ENCODE measurements at regions of chr1 and their contacts with region 1.

Region 1: GRCh38 chr1:246753670-246754535 is 29.7 kb downstream of the SCCPDH start:
- H3K4me3 Mint-ChIP-seq: no peak overlapping the region
- H3K27ac Mint-ChIP-seq: no peak overlapping the region
- H3K4me1 Mint-ChIP-seq: peaks cover 7% of the 10 kb centered on the region
- H3K27me3 Mint-ChIP-seq: no peaks in the 10 kb centered on the region

Region 2: DNA sequence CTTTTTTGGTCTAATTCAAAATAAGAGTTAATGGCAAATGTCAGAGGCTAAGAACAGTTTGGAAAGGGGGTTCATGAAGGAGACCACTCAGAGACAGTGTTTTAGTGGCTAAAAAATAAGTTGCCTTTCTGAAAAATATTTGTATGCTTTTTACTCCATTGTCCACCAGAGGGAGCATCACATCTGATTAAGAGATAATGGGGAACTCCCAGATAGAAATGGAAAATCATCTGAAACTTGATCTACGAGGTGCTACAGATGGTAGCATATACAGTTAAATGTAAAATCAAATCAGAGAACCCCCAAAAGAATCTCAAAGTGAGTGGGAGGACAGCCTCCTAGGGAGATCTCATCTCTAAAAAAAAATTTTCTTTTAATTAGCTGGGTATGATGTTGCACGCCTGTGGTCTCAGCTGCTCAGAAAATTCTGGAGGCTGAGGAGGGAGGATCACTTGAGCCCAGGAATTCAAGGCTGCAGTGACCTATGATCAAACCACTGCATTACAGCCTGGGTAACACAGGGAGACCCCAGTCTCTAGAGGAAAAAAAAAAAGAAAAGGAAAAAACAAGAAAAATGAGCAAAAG is 256.5 kb before region 1 on chr1:
- intact Hi-C with region 1: loop called (anchors 1 kb)
- H3K4me3 Mint-ChIP-seq: no peak overlapping the region
- H3K27ac Mint-ChIP-seq: no peak overlapping the region
- H3K4me1 Mint-ChIP-seq: peaks cover 11% of the 10 kb centered on the region
- H3K27me3 Mint-ChIP-seq: no peaks in the 10 kb centered on the region

Region 3: GRCh38 chr1:246566128-246566812 is 187.6 kb before region 1 on chr1 and contains the starts of genes CNST and TFB2M:
- intact Hi-C with region 1: loop called (anchors 10 kb)
- H3K4me3 Mint-ChIP-seq: peak within 1 kb of the TSS; percentile 99
- H3K27ac Mint-ChIP-seq: peak within 1 kb of the TSS; percentile 99
- H3K4me1 Mint-ChIP-seq: peaks cover 40% of the 10 kb centered on the region
- H3K27me3 Mint-ChIP-seq: no peaks in the 10 kb centered on the region

Region 4: DNA sequence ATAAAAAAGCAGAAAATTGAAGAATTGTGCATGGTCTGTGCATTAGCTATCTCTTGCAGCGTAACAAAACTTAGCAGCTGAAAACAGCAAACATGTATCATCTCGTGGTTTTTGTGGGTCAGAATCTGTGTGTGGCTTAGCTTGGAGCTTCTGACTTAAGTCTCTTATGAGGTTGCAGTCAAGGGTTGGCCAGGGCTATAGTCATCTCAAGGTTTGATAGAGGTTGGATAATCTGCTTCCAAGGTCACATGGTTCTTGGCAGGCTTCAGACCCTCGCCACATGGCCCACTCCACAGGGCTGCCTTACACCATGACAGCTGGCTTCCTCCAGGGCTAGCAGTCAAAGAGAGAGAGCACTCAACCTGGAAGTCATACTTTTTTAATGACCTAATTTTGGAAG is 151.7 kb before region 1 on chr1:
- intact Hi-C with region 1: no loop called
- H3K4me3 Mint-ChIP-seq: no peak overlapping the region
- H3K27ac Mint-ChIP-seq: no peak overlapping the region
- H3K4me1 Mint-ChIP-seq: peaks cover 8% of the 10 kb centered on the region
- H3K27me3 Mint-ChIP-seq: no peaks in the 10 kb centered on the region

Region 5: DNA sequence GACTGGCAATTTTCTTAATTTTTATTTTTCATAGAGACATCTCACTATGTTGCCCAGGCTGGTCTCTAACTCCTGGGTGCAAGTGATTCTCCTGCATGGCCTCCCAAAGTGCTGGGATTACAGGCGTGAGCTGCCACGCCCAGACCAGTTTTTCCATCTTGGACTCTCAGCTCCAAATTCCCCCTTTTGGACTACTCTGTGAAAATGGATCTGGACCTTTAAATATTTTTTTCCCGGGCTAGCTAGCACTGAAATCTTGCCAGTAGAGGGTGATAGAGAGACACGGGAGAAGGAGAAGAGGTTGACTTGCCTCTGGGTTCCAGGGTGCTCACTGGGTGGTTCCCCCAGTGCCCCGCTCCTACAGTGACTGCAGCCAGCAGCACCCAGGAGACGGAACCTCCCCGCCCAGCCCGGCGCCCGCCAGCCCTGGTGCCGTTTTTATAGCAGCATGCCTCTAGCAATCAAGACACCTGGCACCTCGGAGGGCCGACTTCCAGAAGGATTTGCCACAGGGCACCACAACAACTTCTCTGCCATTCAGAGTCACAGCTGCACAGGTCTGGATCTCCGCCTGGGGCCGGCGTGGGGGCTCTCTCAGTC is 64.4 kb before region 1 on chr1:
- intact Hi-C with region 1: loop called (anchors 1 kb)
- H3K4me3 Mint-ChIP-seq: peak overlapping the region; percentile 52
- H3K27ac Mint-ChIP-seq: no peak overlapping the region
- H3K4me1 Mint-ChIP-seq: peaks cover 3% of the 10 kb centered on the region
- H3K27me3 Mint-ChIP-seq: peaks cover 2% of the 10 kb centered on the region